Mammary epithelial cell (primary cell): ENCODE measurements at regions of chr1 and their contacts with region 1.

Region 1: DNA sequence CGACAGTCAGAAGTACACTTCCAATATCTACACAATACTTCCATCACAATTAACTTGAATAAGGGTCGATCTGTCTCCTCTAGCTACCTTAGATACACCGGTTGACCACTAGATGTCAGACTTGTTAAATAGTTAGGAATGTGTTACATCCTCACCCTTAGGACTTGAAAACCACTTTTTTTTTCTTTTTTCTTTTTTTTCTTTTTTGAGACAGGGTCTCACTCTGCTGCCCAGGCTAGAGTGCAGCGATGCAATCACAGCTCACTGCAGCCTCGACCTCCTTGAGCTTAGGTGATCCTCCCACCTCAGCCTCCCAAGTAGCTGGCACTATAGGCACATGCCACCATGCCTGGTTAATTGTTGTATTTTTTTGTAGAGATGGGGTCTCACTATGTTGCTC is 120.4 kb upstream of the GREM2 start:
- DNase-seq: peak; percentile 8
- H3K4me3 ChIP-seq: no peak overlapping the region
- H3K27ac ChIP-seq: no peak overlapping the region
- H3K4me1 ChIP-seq: no peaks in the 10 kb centered on the region
- H3K27me3 ChIP-seq: no peaks in the 10 kb centered on the region
- CTCF ChIP-seq: peak; percentile 54 to 63

Region 2: DNA sequence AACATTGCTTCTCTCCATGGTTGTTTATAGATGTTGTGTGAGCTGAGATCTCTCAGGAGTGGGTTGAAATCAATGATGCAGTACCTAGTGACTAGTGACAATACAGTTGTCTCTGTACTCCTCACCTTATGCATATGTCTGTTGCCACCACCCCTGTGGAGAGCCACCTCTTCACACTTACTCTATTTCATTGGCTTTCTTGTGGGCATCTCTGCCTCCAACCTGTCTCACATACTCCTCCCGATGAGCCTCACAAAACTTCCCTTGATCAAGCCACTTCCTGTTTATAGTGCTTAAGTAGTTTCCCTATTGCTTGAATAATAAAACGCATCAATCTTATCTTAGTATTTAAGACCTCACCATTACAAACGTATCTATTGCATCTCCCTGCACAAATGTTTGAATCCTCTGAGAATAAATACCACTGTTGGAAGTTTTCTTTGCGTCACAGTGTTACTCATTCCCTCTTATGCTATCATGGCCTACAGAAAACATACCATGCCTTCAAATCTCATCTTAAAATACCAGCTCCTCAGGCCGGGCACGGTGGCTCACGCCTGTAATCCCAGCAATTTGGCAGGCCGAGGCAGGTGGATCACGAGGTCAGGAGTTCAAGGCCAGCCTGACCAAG is 65.7 kb before region 1 on chr1:
- CTCF ChIA-PET with region 1: no interaction called
- dilution Hi-C with region 1: no loop called
- in situ Hi-C with region 1: no loop called
- intact Hi-C with region 1: no loop called
- DNase-seq: no peak
- H3K4me3 ChIP-seq: no peak overlapping the region
- H3K27ac ChIP-seq: no peak overlapping the region
- H3K4me1 ChIP-seq: no peaks in the 10 kb centered on the region
- H3K27me3 ChIP-seq: no peaks in the 10 kb centered on the region
- CTCF ChIP-seq: no peak

Region 3: GRCh38 chr1:240803151-240803550 is 70.8 kb after region 1 on chr1:
- CTCF ChIA-PET with region 1: no interaction called
- dilution Hi-C with region 1: no loop called
- in situ Hi-C with region 1: no loop called
- intact Hi-C with region 1: no loop called
- DNase-seq: no peak
- H3K4me3 ChIP-seq: no peak overlapping the region
- H3K27ac ChIP-seq: no peak overlapping the region
- H3K4me1 ChIP-seq: no peaks in the 10 kb centered on the region
- H3K27me3 ChIP-seq: no peaks in the 10 kb centered on the region
- CTCF ChIP-seq: no peak

Region 4: GRCh38 chr1:240820816-240821215 is 88.4 kb after region 1 on chr1:
- CTCF ChIA-PET with region 1: no interaction called
- dilution Hi-C with region 1: no loop called
- in situ Hi-C with region 1: no loop called
- intact Hi-C with region 1: no loop called
- DNase-seq: no peak
- H3K4me3 ChIP-seq: no peak overlapping the region
- H3K27ac ChIP-seq: no peak overlapping the region
- H3K4me1 ChIP-seq: no peaks in the 10 kb centered on the region
- H3K27me3 ChIP-seq: no peaks in the 10 kb centered on the region
- CTCF ChIP-seq: no peak

Region 5: DNA sequence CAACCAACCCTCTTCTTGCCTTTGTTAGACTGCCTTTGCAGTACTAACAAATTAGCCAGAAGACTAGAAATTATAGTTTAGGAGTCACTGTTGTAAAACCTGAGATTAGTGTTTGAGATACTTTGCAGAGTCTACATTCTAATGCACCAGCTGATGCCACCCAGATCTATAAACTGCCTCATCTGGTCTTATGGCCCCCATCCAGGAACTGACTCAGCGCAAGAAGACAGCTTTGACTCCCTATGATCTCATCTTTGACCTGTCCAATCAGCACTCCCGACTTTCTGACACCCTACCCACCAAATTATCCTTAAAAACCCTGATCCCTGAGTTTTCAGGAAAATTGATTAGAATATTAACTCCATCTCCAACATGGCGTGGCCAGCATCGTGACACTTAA is 290.0 kb after region 1 on chr1:
- CTCF ChIA-PET with region 1: no interaction called
- dilution Hi-C with region 1: no loop called
- in situ Hi-C with region 1: no loop called
- intact Hi-C with region 1: no loop called
- DNase-seq: no peak
- H3K4me3 ChIP-seq: no peak overlapping the region
- H3K27ac ChIP-seq: no peak overlapping the region
- H3K4me1 ChIP-seq: no peaks in the 10 kb centered on the region
- H3K27me3 ChIP-seq: no peaks in the 10 kb centered on the region
- CTCF ChIP-seq: no peak

Region 6: DNA sequence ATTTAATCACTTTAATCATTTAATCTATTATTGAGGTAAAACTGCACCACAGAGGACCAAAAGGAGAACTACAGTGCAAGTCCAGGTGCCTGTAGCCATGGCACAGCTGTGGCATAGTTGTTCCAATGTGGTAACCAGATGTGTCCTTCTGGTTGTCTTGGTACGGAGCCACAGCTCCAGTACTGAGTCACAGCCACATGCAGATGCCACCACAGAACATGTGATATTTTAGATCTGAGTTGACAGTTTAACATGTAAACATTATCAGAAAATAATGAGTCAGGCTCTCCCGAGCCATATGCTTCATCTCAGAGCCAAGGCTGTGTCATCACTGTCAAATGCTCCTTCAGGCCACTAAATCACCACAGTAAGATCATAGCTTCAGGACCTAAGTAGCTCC is 681.0 kb after region 1 on chr1:
- CTCF ChIA-PET with region 1: no interaction called
- dilution Hi-C with region 1: no loop called
- in situ Hi-C with region 1: no loop called
- intact Hi-C with region 1: loop called (anchors 5 kb)
- DNase-seq: peak; percentile 54
- H3K4me3 ChIP-seq: no peak overlapping the region
- H3K27ac ChIP-seq: no peak overlapping the region
- H3K4me1 ChIP-seq: peaks cover 5% of the 10 kb centered on the region
- H3K27me3 ChIP-seq: no peaks in the 10 kb centered on the region
- CTCF ChIP-seq: no peak

Region 7: GRCh38 chr1:241485554-241485992 is 753.2 kb after region 1 on chr1:
- CTCF ChIA-PET with region 1: interaction called, 4 read pairs
- dilution Hi-C with region 1: no loop called
- in situ Hi-C with region 1: loop called (anchors 25 kb)
- intact Hi-C with region 1: loop called (anchors 5 kb)
- DNase-seq: peak; percentile 2
- H3K4me3 ChIP-seq: no peak overlapping the region
- H3K27ac ChIP-seq: no peak overlapping the region
- H3K4me1 ChIP-seq: peaks cover 22% of the 10 kb centered on the region
- H3K27me3 ChIP-seq: no peaks in the 10 kb centered on the region
- CTCF ChIP-seq: peak; percentile 46 to 49

Region 8: GRCh38 chr1:241627453-241628259 is 895.3 kb after region 1 on chr1:
- CTCF ChIA-PET with region 1: no interaction called
- dilution Hi-C with region 1: no loop called
- in situ Hi-C with region 1: no loop called
- intact Hi-C with region 1: loop called (anchors 10 kb)
- DNase-seq: peak; percentile 70
- H3K4me3 ChIP-seq: no peak overlapping the region
- H3K27ac ChIP-seq: no peak overlapping the region
- H3K4me1 ChIP-seq: no peaks in the 10 kb centered on the region
- H3K27me3 ChIP-seq: no peaks in the 10 kb centered on the region
- CTCF ChIP-seq: peak; percentile 68 to 75

Region 9: DNA sequence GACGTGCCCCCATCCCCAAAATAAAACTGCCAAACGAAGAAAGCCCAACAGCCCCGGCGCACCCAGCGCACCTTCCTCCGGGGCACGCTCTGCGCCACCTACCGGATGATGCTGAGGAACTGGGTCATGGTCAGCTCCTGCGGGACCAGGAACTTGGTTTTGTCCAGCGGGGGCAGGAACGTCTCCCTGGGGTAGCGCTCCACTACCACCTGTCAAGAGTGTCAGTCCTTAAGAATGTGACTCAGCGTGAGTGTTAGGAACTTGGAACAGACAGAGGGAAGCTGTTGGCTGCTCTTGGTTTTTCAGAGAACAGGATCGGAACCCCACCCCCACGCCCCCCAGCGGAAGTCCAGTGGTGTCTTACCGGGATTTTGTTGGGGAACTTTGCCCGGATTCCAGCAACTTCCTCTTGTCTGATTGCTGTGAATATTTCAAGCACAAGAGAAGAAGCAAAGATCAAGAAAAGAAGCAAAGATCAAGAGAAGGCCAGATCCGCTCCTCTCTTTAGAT is 1266.1 kb after region 1 on chr1:
- CTCF ChIA-PET with region 1: no interaction called
- dilution Hi-C with region 1: no loop called
- in situ Hi-C with region 1: no loop called
- intact Hi-C with region 1: loop called (anchors 10 kb)
- DNase-seq: peak; percentile 78
- H3K4me3 ChIP-seq: no peak overlapping the region
- H3K27ac ChIP-seq: no peak overlapping the region
- H3K4me1 ChIP-seq: peaks cover 3% of the 10 kb centered on the region
- H3K27me3 ChIP-seq: no peaks in the 10 kb centered on the region
- CTCF ChIP-seq: peak in 1 of 2 donors; percentile 48